ENCODE measurements at regions of chr11 and their contacts with region 1.

Region 1: GRCh38 chr11:71928737-71929452 is at the start of gene RNF121:
- DNase-seq: peak; percentile 96
- H3K4me3 ChIP-seq: peak within 1 kb of the TSS; percentile 71 to 96 (median 87)
- H3K27ac ChIP-seq: peak within 1 kb of the TSS; percentile 97
- H3K4me1 ChIP-seq: peaks cover 8% of the 10 kb centered on the region
- H3K27me3 ChIP-seq: no peaks in the 10 kb centered on the region
- CTCF ChIP-seq: no peak
- total RNA-seq, gene RNF121: 32.2 to 33.9 TPM

Region 2: DNA sequence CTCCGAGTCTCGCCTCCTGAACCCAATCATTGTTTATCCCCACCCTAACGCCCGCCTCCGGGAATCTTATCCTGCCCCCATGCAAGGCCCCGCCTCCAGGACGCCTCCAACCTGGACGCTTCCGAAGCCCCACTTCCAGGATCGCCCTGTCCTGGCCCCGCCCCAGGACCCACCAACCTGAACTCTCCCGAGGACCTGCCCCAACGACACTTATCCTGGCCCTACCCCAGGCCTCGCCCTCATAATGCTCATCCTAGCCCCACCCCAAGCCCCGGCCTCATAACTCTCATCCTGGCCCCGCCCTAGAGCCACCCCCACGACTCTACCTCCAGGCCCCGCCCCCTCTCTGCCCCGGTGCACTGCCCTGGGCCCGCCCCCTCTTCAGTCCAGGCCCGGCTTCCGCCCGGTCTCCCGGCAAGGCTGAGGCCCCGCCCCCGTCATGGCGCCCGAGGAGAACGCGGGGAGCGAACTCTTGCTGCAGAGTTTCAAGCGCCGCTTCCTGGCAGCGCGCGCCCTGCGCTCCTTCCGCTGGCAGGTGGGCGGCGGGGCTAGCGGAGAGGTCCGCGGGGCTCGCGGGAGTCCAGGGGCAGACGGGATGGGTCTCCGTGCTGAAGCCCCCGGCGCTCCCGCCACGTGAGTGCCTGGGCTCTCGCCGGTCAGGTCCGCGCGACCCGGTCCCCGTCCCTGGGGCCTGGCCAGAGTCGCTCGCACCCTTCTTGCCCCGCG is 141.6 kb before region 1 on chr11:
- CTCF ChIA-PET with region 1: no interaction called
- dilution Hi-C with region 1: no loop called
- in situ Hi-C with region 1: no loop called
- intact Hi-C with region 1: loop called (anchors 10 kb)
- DNase-seq: peak; percentile 98
- H3K4me3 ChIP-seq: peak overlapping the region; percentile 58 to 67 (median 66)
- H3K27ac ChIP-seq: peak overlapping the region; percentile 89
- H3K4me1 ChIP-seq: peaks cover 13% of the 10 kb centered on the region
- H3K27me3 ChIP-seq: no peaks in the 10 kb centered on the region
- CTCF ChIP-seq: no peak

Region 3: DNA sequence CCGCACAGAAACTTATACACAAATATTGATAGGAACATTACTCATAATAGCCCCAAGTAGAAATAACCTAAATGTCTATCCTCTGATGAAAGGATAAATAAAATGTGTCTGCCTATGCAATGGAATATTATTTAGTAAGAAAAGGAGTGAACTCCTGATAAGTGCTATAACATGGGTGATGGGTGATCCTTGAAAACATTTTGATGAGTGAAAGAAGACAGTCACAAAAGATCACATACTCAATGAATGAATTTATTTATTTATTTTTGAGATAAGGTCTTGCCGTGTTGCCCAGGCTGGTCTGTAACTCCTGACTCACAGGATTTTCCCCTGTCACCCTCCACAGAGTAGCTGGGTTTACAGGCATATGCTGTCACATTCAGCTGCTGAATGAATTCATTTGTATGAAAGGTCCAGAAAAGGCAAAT is 17.3 kb after region 1 on chr11:
- CTCF ChIA-PET with region 1: no interaction called
- dilution Hi-C with region 1: no loop called
- in situ Hi-C with region 1: no loop called
- intact Hi-C with region 1: loop called (anchors 2 kb)
- DNase-seq: peak; percentile 82
- H3K4me3 ChIP-seq: no peak overlapping the region
- H3K27ac ChIP-seq: peak overlapping the region; percentile 18
- H3K4me1 ChIP-seq: peaks cover 21% of the 10 kb centered on the region
- H3K27me3 ChIP-seq: no peaks in the 10 kb centered on the region
- CTCF ChIP-seq: no peak

Region 4: GRCh38 chr11:71962428-71963038 is 33.6 kb after region 1 on chr11:
- CTCF ChIA-PET with region 1: no interaction called
- dilution Hi-C with region 1: no loop called
- in situ Hi-C with region 1: no loop called
- intact Hi-C with region 1: no loop called
- DNase-seq: no peak
- H3K4me3 ChIP-seq: no peak overlapping the region
- H3K27ac ChIP-seq: no peak overlapping the region
- H3K4me1 ChIP-seq: no peaks in the 10 kb centered on the region
- H3K27me3 ChIP-seq: no peaks in the 10 kb centered on the region
- CTCF ChIP-seq: no peak